Endothelial cell of umbilical vein (primary cell): ENCODE measurements at regions of chr6 and their contacts with region 1.

Region 1: DNA sequence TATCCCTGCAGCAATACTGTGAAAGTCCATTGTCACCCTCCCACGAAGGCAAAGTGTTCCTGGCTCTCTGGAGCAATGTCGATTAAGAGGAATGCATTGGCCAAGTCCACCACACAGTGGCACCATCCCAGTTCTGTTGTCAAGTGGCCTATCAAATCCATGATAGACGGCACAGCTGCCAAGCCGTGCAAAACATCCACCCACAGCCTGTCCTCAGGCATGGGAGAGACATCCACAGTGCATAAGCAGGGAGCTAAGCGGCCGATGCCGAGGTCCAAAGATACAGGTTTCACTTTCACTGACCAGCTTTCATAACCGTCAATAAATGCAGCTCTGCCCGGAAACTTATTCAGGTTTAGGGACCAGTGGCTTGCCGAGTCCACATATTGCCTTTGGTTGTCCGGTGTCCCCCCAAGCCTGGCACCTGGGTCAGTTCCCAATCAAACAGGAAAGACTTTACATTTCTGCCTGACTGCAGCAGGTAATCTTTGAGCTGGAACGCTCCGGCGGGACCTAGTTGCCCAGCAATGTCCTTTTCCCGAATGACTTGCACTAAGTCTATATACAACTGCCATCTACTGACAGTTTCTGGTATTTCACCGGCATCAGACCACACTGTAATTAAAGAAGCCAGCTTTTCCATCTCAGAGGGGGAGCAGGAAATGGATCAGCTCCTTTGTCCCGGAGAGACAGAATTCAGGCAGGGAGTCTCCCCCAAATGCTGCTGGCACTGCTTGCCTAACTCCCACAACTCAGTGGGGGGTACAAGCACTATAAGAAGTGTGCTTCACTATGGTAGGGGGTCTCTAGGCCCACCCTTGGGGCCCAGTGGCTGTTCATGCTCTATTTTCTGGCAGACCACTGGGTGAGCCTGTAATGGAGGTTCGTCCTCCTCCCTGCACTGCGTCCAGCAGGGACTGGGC is 6.3 kb downstream of the ZKSCAN3 start:
- DNase-seq: peak; percentile 93
- H3K4me3 ChIP-seq: peak overlapping the region; percentile 52 to 84 (median 55)
- H3K27ac ChIP-seq: peak overlapping the region; percentile 60
- H3K4me1 ChIP-seq: peaks cover 36% of the 10 kb centered on the region
- H3K27me3 ChIP-seq: no peaks in the 10 kb centered on the region
- CTCF ChIP-seq: peak; percentile 66 to 73
- POLR2A ChIP-seq: peak; percentile 40

Region 2: DNA sequence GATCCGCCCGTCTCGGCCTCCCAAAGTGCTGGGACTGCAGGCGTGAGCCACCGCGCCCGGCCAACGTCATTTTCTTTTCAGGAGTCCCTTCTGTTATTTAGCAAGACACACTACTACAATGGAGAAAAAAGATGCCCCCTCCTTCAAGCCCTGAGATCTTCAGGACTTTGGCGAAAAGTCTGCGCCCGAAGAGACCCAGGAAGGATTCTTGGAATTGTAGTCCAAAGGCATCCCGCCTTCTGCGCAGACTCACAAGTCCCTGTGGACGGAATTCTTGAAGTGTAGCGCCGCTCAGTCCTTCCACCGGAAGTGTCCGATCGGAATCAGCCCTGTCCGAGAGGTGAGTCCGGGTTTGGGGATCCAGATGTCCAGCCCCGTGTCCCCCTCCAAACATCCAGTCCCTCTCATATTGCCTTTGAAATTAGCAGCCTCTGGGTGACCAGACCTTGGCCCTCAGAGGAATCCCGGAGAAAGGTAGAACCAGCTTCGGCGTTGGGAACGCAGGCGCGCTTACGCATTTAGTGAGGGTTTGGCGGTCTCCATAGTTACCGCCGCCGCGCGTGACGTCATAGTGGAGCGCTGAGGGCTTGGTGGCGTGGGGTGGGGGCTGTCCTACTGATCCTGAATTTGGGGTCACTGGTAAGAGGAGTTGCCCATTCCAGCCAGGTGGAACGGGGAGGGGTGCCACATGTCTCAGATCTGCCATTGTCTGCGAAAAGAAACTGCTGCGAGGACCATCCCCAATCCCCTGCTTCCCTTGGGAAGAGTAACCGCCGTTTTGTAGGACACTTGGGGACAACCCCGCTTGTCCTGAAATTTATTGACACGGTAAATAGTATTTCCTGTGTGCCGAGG is 275.1 kb before region 1 on chr6:
- CTCF ChIA-PET with region 1: interaction called, 6 read pairs
- POLR2A ChIA-PET with region 1: interaction called, 3 read pairs
- dilution Hi-C with region 1: no loop called
- intact Hi-C with region 1: loop called (anchors 1 kb)
- DNase-seq: peak; percentile 97
- H3K4me3 ChIP-seq: peak overlapping the region; percentile 1 to 73 (median 64)
- H3K27ac ChIP-seq: peak overlapping the region; percentile 87
- H3K4me1 ChIP-seq: peaks cover 9% of the 10 kb centered on the region
- H3K27me3 ChIP-seq: no peaks in the 10 kb centered on the region
- CTCF ChIP-seq: no peak
- POLR2A ChIP-seq: peak; percentile 36

Region 3: GRCh38 chr6:28225056-28225834 is 130.8 kb before region 1 on chr6 and contains the start of gene ZSCAN9:
- CTCF ChIA-PET with region 1: interaction called, 11 read pairs
- POLR2A ChIA-PET with region 1: interaction called, 3 read pairs
- dilution Hi-C with region 1: no loop called
- intact Hi-C with region 1: loop called (anchors 1 kb)
- DNase-seq: peak; percentile 89
- H3K4me3 ChIP-seq: peak within 1 kb of the TSS; percentile 48 to 99 (median 86)
- H3K27ac ChIP-seq: peak within 1 kb of the TSS; percentile 77
- H3K4me1 ChIP-seq: peaks cover 10% of the 10 kb centered on the region
- H3K27me3 ChIP-seq: no peaks in the 10 kb centered on the region
- CTCF ChIP-seq: no peak
- POLR2A ChIP-seq: peak; percentile 82
- total RNA-seq, gene ZSCAN9: 18.0 and 18.6 TPM in 2 replicates

Region 4: DNA sequence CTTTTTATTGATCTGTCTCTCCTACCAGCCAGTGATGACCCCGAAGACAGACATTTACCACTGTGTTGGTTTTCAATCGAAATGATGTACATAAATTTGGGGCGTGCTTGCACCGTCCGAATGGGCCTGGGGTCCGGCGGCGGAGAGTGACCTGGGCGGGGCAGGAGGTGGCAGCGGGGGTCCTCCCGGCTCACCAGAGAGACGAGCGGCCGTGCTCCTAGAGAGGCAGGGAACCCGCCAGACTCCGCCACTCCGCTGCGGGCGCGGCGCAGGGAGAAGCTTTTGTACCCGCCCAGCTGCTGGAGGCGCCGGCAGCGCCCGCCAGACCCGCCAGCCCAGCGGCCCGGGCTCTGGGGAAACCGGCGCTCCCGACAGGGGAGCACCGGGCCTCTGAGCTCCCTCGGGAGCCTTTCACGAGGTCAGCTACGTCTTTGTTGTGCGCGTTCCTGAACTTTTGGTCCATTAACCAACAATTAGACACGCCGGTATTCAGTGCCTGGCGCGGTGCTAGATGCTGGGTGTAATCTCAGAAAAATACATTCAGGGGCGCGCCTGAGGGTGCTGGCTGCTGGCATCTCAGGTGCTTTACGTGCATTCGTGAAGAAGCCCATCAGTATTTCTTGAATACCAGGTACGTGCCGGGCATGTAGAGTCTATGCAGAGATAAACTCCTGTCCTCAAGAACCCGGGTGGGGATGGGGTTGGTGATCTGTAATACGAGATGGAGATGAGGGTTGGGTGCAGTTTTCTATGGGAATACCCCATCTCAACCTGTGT is 74.5 kb before region 1 on chr6 and contains the start of gene PGBD1:
- CTCF ChIA-PET with region 1: interaction called, 19 read pairs
- POLR2A ChIA-PET with region 1: interaction called, 7 read pairs
- dilution Hi-C with region 1: no loop called
- intact Hi-C with region 1: loop called (anchors 2 kb)
- DNase-seq: peak; percentile 77
- H3K4me3 ChIP-seq: peak within 1 kb of the TSS; percentile 68 to 96 (median 93)
- H3K27ac ChIP-seq: peak within 1 kb of the TSS; percentile 46
- H3K4me1 ChIP-seq: peaks cover 7% of the 10 kb centered on the region
- H3K27me3 ChIP-seq: no peaks in the 10 kb centered on the region
- CTCF ChIP-seq: no peak
- POLR2A ChIP-seq: peak; percentile 81
- total RNA-seq, gene PGBD1: 9.6 and 10.1 TPM in 2 replicates

Region 5: DNA sequence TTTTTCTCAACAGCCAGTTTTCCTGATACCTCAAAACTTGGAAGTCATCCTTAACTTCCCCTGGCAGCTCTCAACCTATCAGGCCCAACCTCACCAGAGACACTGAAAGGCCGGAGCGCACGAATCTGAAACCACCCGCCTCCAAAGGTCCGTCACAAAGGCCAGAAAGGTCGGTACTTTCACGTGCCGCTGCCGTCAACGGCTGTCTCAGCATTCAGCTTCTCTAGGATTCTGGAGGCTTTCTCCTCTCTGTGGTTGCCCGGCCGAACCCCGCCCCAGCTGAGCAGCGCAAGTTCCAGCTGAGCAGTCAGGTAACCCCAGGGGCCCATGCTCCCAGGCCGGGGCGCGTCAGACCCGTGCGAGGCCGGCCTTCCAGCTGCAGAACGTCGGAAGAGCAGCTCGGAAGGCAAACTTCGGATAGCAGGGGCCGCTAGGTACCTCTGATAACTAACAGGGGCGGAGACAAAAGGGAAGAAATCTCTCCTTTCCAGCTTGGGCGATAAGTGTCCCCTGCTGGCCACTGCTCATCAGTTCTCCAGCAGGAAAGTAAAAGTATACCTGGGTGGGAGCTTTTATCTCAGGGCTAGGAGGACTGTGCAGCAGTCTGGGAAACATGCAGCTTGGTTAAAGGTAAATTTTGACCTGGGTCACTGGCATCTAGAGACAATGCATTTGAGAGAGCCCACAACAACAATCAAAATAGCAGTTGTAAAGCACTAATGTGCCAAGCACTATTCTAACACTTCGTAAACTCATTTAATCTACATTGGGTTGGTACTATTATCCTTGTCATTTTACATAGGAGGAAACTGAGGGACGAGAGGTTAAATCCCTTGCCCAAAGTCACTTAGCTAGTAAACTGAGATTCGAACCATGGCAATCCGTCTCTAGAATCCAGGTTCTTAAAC is 27.5 kb after region 1 on chr6:
- CTCF ChIA-PET with region 1: interaction called, 59 read pairs
- POLR2A ChIA-PET with region 1: no interaction called
- dilution Hi-C with region 1: no loop called
- intact Hi-C with region 1: loop called (anchors 1 kb)
- DNase-seq: peak; percentile 93
- H3K4me3 ChIP-seq: peak overlapping the region; percentile 37 to 45 (median 42)
- H3K27ac ChIP-seq: peak overlapping the region; percentile 14
- H3K4me1 ChIP-seq: peaks cover 9% of the 10 kb centered on the region
- H3K27me3 ChIP-seq: no peaks in the 10 kb centered on the region
- CTCF ChIP-seq: peak; percentile 54 to 62
- POLR2A ChIP-seq: no peak

Region 6: GRCh38 chr6:28553986-28554881 is 198.2 kb after region 1 on chr6:
- CTCF ChIA-PET with region 1: no interaction called
- POLR2A ChIA-PET with region 1: no interaction called
- dilution Hi-C with region 1: no loop called
- intact Hi-C with region 1: no loop called
- DNase-seq: no peak
- H3K4me3 ChIP-seq: no peak overlapping the region
- H3K27ac ChIP-seq: no peak overlapping the region
- H3K4me1 ChIP-seq: no peaks in the 10 kb centered on the region
- H3K27me3 ChIP-seq: peaks cover 5 to 17% of the 10 kb centered on the region in 2 experiments
- CTCF ChIP-seq: no peak
- POLR2A ChIP-seq: no peak

Region 7: DNA sequence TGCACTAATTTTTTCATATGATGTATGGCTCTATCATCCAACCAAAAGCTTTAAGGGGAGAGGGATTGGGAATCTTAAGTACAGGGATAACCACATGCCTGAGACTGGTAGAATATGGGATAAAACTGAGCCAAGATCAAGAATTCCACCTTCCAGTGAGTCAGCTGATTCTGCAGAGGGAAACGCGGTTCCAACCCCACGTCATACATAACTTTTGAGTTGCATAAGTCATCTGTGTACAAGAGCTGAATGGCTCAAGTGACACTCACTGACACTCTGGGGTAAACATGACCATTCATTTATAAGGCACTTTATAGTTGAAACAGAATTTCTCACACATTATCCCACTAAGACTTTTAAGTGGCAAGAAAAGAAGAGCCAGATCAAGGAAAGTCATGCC is 551.4 kb after region 1 on chr6:
- CTCF ChIA-PET with region 1: no interaction called
- POLR2A ChIA-PET with region 1: no interaction called
- dilution Hi-C with region 1: no loop called
- intact Hi-C with region 1: no loop called
- DNase-seq: no peak
- H3K4me3 ChIP-seq: no peak overlapping the region
- H3K27ac ChIP-seq: no peak overlapping the region
- H3K4me1 ChIP-seq: no peaks in the 10 kb centered on the region
- H3K27me3 ChIP-seq: no peaks in the 10 kb centered on the region
- CTCF ChIP-seq: no peak
- POLR2A ChIP-seq: no peak